ENCODE measurements at regions of chr12 and their contacts with region 1.

Region 1: GRCh38 chr12:76455582-76456345 is 103.8 kb downstream of the OSBPL8 start:
- DNase-seq: peak; percentile 95
- ATAC-seq: peak; percentile 89
- H3K4me3 ChIP-seq: 0 out of 2 replicates have a peak overlapping the region, but pooled peaks have one; percentile 19
- H3K27ac ChIP-seq: peak overlapping the region; percentile 52
- H3K4me1 ChIP-seq: peaks cover 31% of the 10 kb centered on the region
- H3K27me3 ChIP-seq: no peaks in the 10 kb centered on the region
- CTCF ChIP-seq: peak; percentile 90

Region 2: DNA sequence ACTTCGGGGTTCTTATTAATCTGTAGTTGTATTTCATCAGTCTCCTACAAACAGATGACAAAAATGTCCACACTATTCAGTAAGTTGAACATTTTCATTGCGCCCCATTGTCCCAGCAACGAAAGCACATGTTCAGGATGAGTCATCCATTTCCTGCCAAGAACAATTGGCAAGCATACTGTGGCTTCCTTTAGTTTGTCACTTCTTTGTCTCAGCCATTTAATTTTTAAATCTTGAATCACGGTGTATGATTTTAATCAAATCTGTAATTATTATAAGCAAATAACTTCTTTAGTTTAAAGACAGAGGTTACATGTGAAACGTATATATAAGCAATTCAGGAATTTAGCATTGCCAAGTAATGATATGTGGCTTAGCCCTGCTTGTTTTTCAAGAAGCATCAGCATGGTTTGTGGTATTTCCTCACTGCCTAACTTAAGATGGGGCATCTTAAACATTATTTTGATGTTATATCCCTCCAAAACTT is 733.0 kb before region 1 on chr12:
- CTCF ChIA-PET with region 1: interaction called, 4 read pairs
- POLR2A ChIA-PET with region 1: no interaction called
- intact Hi-C with region 1: loop called (anchors 10 kb)
- DNase-seq: peak; percentile 88
- ATAC-seq: peak; percentile 37
- H3K4me3 ChIP-seq: no peak overlapping the region
- H3K27ac ChIP-seq: peak overlapping the region; percentile 75
- H3K4me1 ChIP-seq: peaks cover 55% of the 10 kb centered on the region
- H3K27me3 ChIP-seq: no peaks in the 10 kb centered on the region
- CTCF ChIP-seq: no peak

Region 3: GRCh38 chr12:76083904-76084862 is 371.6 kb before region 1 on chr12 and contains the start of gene NAP1L1:
- CTCF ChIA-PET with region 1: interaction called, 3 read pairs
- POLR2A ChIA-PET with region 1: no interaction called
- intact Hi-C with region 1: loop called (anchors 5 kb)
- DNase-seq: peak; percentile 98
- ATAC-seq: peak; percentile 89
- H3K4me3 ChIP-seq: peak within 1 kb of the TSS; percentile 93
- H3K27ac ChIP-seq: peak within 1 kb of the TSS; percentile 76
- H3K4me1 ChIP-seq: peaks cover 31% of the 10 kb centered on the region
- H3K27me3 ChIP-seq: no peaks in the 10 kb centered on the region
- CTCF ChIP-seq: no peak
- total RNA-seq, gene NAP1L1: 200 and 247 TPM in 2 replicates

Region 4: DNA sequence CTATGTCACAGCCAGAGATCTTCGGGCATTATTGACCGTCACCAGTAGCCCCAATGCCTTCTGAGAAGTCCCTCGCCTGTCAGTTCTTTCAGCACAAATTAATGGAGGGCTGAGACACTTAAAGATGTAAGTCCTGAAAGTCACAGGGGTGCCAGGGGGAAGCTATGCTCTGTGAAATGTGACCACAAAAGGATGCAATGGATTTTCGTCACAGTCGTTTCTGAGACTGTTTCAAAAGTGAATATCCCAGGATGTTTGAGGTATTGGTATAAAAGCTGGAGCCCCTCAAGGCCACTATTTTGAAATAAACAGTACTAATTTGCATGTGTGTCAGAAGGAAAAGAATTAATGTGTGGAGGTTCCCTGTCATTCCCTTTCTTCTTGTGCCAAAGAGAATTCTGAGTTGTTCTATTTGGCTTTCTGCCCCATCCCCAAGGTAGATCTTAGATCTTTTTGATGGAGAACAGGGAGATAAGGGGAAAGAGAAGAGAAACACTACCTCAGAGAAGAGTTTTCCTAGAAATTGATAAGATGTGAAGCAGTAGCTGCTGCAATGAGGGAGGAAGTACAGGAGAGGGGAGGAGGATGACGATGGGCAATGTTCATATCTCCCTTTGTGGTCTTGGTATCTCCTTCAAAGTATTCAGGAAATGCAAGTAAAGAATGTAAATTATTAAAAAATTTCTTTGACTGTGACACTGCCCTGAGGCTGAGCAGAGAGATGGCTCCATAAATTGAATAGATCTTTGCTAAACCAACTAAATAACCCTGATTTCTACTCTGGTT is 269.4 kb before region 1 on chr12:
- CTCF ChIA-PET with region 1: no interaction called
- POLR2A ChIA-PET with region 1: no interaction called
- intact Hi-C with region 1: no loop called
- DNase-seq: no peak
- ATAC-seq: no peak
- H3K4me3 ChIP-seq: no peak overlapping the region
- H3K27ac ChIP-seq: no peak overlapping the region
- H3K4me1 ChIP-seq: peaks cover 15% of the 10 kb centered on the region
- H3K27me3 ChIP-seq: no peaks in the 10 kb centered on the region
- CTCF ChIP-seq: no peak

Region 5: GRCh38 chr12:76348079-76348901 is 107.5 kb before region 1 on chr12 and contains the start of gene BBS10:
- CTCF ChIA-PET with region 1: interaction called, 5 read pairs
- POLR2A ChIA-PET with region 1: interaction called, 4 read pairs
- intact Hi-C with region 1: loop called (anchors 1 kb)
- DNase-seq: peak; percentile 92
- ATAC-seq: peak; percentile 90
- H3K4me3 ChIP-seq: peak within 1 kb of the TSS; percentile 92
- H3K27ac ChIP-seq: peak within 1 kb of the TSS; percentile 60
- H3K4me1 ChIP-seq: peaks cover 21% of the 10 kb centered on the region
- H3K27me3 ChIP-seq: no peaks in the 10 kb centered on the region
- CTCF ChIP-seq: peak; percentile 67
- total RNA-seq, gene BBS10: 7.5 and 8.0 TPM in 2 replicates

Region 6: GRCh38 chr12:76559400-76560085 is 103.8 kb after region 1 on chr12 and contains the start of gene OSBPL8:
- CTCF ChIA-PET with region 1: no interaction called
- POLR2A ChIA-PET with region 1: no interaction called
- intact Hi-C with region 1: loop called (anchors 5 kb)
- DNase-seq: peak; percentile 93
- ATAC-seq: peak; percentile 76
- H3K4me3 ChIP-seq: peak within 1 kb of the TSS; percentile 100
- H3K27ac ChIP-seq: peak within 1 kb of the TSS; percentile 29
- H3K4me1 ChIP-seq: peaks cover 42% of the 10 kb centered on the region
- H3K27me3 ChIP-seq: no peaks in the 10 kb centered on the region
- CTCF ChIP-seq: no peak; the same call in 1 of the 2 replicates
- total RNA-seq, gene OSBPL8: 28.5 and 42.6 TPM in 2 replicates

Measured in PC-3 (cell line).